ENCODE measurements at regions of chr2 and their contacts with region 1.

Region 1: DNA sequence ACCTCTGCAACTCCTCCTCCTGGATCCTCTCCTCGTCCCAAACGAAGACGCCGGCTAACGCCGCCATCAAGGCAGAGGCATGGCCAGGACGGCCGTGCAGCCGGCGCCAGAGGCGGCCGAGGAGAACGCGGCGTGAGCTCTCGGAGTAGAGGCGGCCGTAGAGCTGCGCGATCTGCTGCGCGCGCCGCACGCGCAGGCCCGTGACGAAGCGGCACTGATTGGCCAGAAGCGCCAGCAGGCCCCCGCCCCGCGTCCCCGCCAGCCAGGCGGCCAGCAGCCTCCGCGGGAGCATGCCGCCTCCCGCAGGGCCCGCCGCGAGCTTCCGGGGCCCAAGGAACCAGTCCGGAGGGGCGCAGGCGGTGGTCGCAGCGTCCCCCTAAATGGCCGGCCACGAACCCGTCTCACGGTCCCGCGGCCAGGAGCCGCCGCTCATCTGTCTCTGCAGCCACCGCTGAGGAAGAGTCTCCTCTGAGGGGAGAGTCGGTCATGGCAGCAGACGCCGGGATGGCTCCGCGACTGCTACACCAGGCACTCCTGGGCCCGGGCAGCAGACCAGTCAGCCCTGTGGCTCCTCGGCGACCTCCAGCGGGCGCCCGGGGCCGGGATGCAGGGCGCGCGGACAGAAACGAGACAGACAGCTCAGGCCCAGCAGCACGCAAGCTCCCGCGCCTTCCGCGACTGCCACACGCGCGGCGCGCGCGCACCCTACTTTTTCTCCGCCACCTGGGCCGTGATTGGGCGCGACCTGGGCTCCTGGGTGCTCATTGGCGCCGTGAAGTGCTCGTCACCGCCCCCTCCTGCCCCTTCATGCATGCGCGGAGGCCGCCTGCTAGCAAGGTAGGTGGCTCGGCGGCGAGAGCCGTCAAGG is at the start of gene STARD7:
- DNase-seq: peak; percentile 89 to 97 (median 94)
- ATAC-seq: peak; percentile 88 to 91 (median 90)
- H3K4me3 ChIP-seq: peak within 1 kb of the TSS; percentile 90 to 93
- H3K4me3 Mint-ChIP-seq: peak within 1 kb of the TSS; percentile 92 to 99 (median 98)
- H3K27ac ChIP-seq: peak within 1 kb of the TSS; percentile 78
- H3K27ac Mint-ChIP-seq: peak within 1 kb of the TSS; percentile 88 to 98
- H3K4me1 ChIP-seq: peaks cover 31 to 46% of the 10 kb centered on the region in 2 experiments
- H3K4me1 Mint-ChIP-seq: peaks cover 53 to 58% (median 55%) of the 10 kb centered on the region in 3 donors
- H3K27me3 ChIP-seq: no peaks in the 10 kb centered on the region
- H3K27me3 Mint-ChIP-seq: no peaks in the 10 kb centered on the region
- total RNA-seq, gene STARD7: 65.0 to 95.3 (median 84.4) TPM

Region 2: GRCh38 chr2:96265840-96266679 is 57.7 kb after region 1 on chr2 and contains the starts of genes CIAO1 and TMEM127:
- CTCF ChIA-PET with region 1: interaction called in 1 of 2 experiments, 5 read pairs
- POLR2A ChIA-PET with region 1: interaction called, 3 to 14 read pairs
- DNase-seq: peak; percentile 94 to 98 (median 96)
- ATAC-seq: peak; percentile 95 to 98 (median 96)
- H3K4me3 ChIP-seq: peak within 1 kb of the TSS; percentile 73 to 86
- H3K4me3 Mint-ChIP-seq: peak within 1 kb of the TSS; percentile 93 to 98 (median 97)
- H3K27ac ChIP-seq: peak within 1 kb of the TSS; percentile 57
- H3K27ac Mint-ChIP-seq: peak within 1 kb of the TSS; percentile 93 to 96
- H3K4me1 ChIP-seq: peaks cover 14 to 54% of the 10 kb centered on the region in 2 experiments
- H3K4me1 Mint-ChIP-seq: peaks cover 48 to 55% (median 49%) of the 10 kb centered on the region in 3 donors
- H3K27me3 ChIP-seq: no peaks in the 10 kb centered on the region
- H3K27me3 Mint-ChIP-seq: no peaks in the 10 kb centered on the region
- total RNA-seq, gene CIAO1: 65.2 to 87.0 (median 80.2) TPM
- total RNA-seq, gene TMEM127: 31.2 to 43.0 (median 40.4) TPM